Breast epithelium (tissue), 4 donors: ENCODE measurements at regions of chr16 and their contacts with region 1.

Region 1: DNA sequence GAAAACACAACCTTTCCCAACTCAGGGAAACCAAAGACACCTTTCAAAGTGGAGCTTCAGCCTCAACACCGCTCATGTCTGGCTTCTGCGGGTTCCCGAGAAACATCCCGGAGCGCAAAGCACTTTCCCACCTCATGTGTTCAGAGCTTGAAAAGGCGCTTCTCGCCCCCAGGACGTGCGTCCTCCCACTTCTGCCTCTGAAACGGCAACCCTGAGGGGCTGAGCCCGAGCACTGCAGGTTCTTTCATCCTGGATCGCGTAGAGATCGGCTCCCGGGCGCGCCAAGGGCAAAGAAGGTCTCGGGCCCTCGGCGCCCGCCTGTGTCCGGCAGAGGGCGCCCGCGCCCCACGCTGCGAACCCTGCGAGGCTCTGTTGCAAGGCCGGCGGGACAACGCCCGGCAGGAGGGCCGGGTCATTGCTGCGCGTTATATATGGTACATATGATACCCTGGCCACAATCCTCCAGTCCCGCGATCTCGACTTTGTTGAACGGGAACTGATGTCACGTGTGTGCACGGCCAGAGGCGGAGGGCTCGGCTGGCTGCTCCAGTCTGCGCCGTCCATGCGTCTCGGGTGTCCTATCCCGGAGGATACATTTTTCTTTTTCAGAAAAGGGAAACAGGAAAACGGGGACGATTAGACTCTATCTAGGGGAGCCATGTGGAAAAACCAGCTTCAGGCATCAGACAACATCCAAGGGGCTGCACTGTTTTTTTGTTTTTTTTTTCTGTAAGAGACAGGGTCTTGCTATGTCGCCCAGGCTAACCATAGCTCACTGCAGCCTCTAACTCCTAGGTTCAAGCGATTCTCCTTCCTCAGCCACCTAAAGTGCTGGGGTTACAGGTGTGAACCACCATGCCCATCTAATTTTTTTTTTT is 19.1 kb downstream of the COQ7 start:
- DNase-seq: peak; percentile 63 to 80
- H3K4me3 ChIP-seq: peak overlapping the region; percentile 42 to 69 (median 49)
- H3K27ac ChIP-seq: peak overlapping the region in 1 of 2 donors; percentile 25
- H3K4me1 ChIP-seq: no peaks in the 10 kb centered on the region
- H3K27me3 ChIP-seq: no peaks in the 10 kb centered on the region
- CTCF ChIP-seq: peak; percentile 96 to 97 (median 97)
- POLR2A ChIP-seq: no peak

Region 2: GRCh38 chr16:19375561-19376158 is 289.1 kb after region 1 on chr16:
- intact Hi-C with region 1: loop called (anchors 10 kb)
- DNase-seq: peak in 1 of 2 donors; percentile 30
- H3K4me3 ChIP-seq: no peak overlapping the region
- H3K27ac ChIP-seq: no peak overlapping the region
- H3K4me1 ChIP-seq: no peaks in the 10 kb centered on the region
- H3K27me3 ChIP-seq: no peaks in the 10 kb centered on the region
- CTCF ChIP-seq: peak; percentile 81 to 94 (median 92)
- POLR2A ChIP-seq: no peak

Region 3: DNA sequence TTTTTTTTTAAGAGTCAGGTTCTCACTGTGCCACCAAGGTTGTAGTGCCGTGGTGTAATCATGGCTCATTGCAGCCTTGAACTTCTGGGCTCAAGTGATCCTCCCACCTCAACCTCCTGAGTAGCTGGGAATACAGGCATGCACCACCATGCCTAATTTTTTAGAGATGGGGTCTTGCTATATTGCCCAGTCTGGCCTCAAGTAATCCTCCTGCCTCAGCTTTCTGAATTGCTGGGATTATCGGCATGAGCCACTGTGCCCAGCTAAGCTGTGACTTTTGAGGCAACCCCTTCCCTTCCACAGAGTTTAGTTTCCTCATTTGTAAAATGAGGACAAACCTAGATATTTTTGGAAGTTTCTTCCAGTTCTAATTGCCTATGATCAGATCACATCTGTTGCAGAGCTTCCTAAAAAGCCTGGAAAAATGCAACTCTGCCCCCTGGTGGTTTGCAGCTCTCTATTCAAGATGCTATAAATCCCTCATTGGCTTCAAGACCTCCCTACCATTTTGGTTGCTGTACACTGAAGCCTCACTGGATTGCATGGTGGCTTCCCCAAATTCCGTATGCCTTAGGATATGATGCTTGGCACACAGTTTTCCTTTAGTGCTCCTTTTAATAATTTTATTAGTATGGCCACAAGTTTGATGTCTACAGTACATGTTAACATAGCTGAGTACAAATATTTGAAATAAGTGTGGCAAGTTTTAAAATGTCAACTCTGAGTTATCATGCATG is 416.0 kb after region 1 on chr16:
- intact Hi-C with region 1: loop called (anchors 10 kb)
- DNase-seq: peak; percentile 41 to 75
- H3K4me3 ChIP-seq: no peak overlapping the region
- H3K27ac ChIP-seq: no peak overlapping the region
- H3K4me1 ChIP-seq: no peaks in the 10 kb centered on the region
- H3K27me3 ChIP-seq: no peaks in the 10 kb centered on the region
- CTCF ChIP-seq: peak; percentile 47 to 75 (median 74)
- POLR2A ChIP-seq: no peak